ENCODE measurements at regions of chr20 and their contacts with region 1.

Region 1: DNA sequence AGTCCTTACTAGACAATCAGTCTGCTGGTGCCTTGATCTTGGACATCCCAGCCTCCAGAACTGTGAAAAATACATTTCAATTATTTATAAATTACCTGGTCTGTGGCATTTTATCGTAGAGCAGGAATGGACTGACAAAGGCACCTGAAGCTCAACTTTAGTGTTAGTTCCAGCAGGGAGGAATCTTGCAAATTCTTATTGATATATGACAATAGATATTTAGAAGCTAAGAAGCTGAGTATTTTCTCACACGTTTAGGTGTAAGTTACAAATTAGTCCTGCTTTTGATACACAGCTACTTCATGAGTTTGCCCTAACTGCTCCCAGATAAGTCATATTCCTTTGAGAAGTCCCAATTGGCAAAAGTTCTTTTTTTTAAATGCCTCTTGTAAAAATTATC is 138.0 kb upstream of the ZNF217 start:
- DNase-seq: no peak
- ATAC-seq: no peak
- H3K4me3 ChIP-seq: no peak overlapping the region
- H3K27ac ChIP-seq: no peak overlapping the region
- H3K4me1 ChIP-seq: peaks cover 27% of the 10 kb centered on the region
- H3K27me3 ChIP-seq: no peaks in the 10 kb centered on the region
- CTCF ChIP-seq: no peak
- EP300 ChIP-seq: no peak
- POLR2A ChIP-seq: no peak
- RAD21 ChIP-seq: no peak

Region 2: GRCh38 chr20:53602661-53603060 is 128.9 kb before region 1 on chr20:
- CTCF ChIA-PET with region 1: no interaction called
- POLR2A ChIA-PET with region 1: no interaction called
- RAD21 ChIA-PET with region 1: no interaction called
- SMC1A ChIA-PET with region 1: no interaction called
- in situ Hi-C with region 1: no loop called
- intact Hi-C with region 1: no loop called
- DNase-seq: no peak
- ATAC-seq: no peak
- H3K4me3 ChIP-seq: no peak overlapping the region
- H3K27ac ChIP-seq: no peak overlapping the region
- H3K4me1 ChIP-seq: peaks cover 8% of the 10 kb centered on the region; the same call in 1 of the 2 replicates
- H3K27me3 ChIP-seq: no peaks in the 10 kb centered on the region
- CTCF ChIP-seq: no peak
- EP300 ChIP-seq: no peak
- POLR2A ChIP-seq: no peak
- RAD21 ChIP-seq: no peak

Region 3: GRCh38 chr20:53718142-53719021 is 13.2 kb before region 1 on chr20:
- CTCF ChIA-PET with region 1: interaction called, 7 read pairs
- POLR2A ChIA-PET with region 1: interaction called, 9 read pairs
- RAD21 ChIA-PET with region 1: interaction called, 17 read pairs
- SMC1A ChIA-PET with region 1: interaction called, 31 read pairs
- in situ Hi-C with region 1: no loop called
- intact Hi-C with region 1: no loop called
- DNase-seq: no peak
- ATAC-seq: no peak
- H3K4me3 ChIP-seq: no peak overlapping the region
- H3K27ac ChIP-seq: no peak overlapping the region
- H3K4me1 ChIP-seq: peaks cover 22% of the 10 kb centered on the region
- H3K27me3 ChIP-seq: no peaks in the 10 kb centered on the region
- CTCF ChIP-seq: no peak
- EP300 ChIP-seq: no peak
- POLR2A ChIP-seq: no peak
- RAD21 ChIP-seq: no peak

Region 4: DNA sequence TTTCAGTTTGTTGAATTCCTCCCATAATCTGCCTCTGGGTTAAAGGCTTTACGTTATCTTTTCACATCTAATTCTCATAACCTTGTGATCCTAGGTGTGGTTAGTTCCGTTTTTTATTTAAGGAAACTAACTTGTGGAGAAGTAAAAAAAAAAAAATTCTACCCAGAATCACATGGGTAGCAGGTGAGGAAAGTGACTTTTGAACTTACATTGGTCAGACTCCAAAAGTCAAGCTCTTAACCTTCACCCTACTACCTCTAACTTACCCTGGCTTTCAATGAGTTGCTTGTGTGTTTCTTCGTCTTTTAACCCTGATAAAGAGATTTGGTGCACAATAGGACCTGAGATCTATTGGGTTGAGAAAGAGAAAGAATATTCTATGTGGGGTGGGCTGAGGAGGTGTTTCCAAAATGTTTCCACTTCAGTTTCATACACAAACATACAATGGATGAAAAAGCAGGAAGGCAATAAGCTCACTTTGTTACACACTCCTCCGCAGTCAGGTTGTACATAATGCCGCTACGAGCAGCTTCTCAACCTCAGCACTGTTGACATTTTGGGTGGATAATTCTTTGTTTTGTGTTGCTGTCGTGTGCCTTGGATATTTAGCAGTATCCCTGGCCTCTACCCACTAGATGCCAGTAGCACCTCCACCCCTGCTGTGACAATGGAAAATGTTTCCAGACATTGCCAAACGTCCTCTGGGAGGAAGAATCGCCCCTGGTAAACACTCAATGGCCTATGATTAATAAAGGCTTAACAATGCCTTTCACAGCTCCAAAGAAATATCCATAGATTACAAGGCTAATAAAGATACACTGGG is 55.1 kb after region 1 on chr20:
- CTCF ChIA-PET with region 1: no interaction called
- POLR2A ChIA-PET with region 1: no interaction called
- RAD21 ChIA-PET with region 1: no interaction called
- SMC1A ChIA-PET with region 1: no interaction called
- in situ Hi-C with region 1: no loop called
- intact Hi-C with region 1: no loop called
- DNase-seq: no peak
- ATAC-seq: no peak; the same call in 2 of the 3 replicates
- H3K4me3 ChIP-seq: no peak overlapping the region
- H3K27ac ChIP-seq: no peak overlapping the region
- H3K4me1 ChIP-seq: peaks cover 12% of the 10 kb centered on the region
- H3K27me3 ChIP-seq: no peaks in the 10 kb centered on the region
- CTCF ChIP-seq: no peak
- EP300 ChIP-seq: no peak
- POLR2A ChIP-seq: no peak
- RAD21 ChIP-seq: no peak

Measured in GM12878 (cell line).